GM18951 (cell line): ENCODE measurements at regions of chr3 and their contacts with region 1.

Region 1: DNA sequence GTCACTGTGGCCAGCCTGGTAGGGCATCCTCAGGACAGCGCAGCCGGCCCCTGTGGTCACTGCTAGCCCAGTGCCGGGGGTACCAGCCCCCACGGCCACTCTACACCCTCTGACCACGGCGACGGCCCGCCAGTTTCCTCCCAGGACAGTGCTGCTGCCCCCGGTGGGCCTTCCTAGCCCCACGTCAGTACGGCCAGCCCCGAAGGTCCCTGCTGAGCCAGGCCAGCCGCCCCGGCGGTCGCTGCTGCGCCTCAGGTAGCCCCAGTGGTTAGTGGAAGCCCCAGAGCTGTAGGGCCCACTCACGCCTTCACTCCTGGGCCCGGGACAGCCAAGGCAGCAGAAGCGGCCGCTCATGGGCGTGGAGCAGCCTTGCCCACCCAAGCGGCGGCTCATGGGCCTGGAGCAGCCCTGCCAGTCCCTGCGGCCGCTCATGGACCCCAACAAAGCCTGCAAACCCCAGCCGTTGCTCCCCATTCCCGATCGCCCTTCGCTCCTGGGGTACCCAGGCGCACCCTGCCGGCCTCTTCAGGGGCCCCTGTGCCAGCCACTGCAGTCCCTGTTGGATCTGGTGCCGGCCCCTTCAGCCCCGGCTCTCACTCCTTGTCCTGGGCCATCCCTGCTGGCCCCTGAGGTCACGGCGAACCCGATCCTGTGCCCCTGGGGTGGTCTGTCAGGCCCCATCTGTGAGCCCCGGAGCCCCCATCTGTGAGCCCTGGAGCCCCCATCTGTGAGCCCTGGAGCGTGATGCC is 9.5 kb upstream of the ROPN1B start:
- POLR2A ChIP-seq: no peak

Region 2: DNA sequence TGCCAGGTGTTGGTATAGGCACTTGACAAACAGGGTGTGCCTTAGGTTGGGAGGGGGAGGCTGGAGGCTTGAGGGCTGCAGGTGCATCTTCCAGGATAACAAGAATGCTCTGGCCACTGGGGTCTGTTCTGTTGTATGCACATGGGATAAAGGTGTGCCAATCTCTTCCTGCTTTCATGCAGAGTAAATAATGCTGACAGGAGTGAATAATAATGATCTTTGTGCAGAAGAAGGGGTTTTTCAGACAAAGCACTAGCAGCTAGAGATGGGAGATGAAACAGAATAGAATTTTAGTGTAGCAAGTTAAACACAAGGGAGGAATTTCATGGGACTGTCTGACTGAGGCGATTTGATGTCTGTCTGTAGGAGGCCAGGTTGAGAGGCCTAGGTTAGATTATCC is 1965.7 kb before region 1 on chr3:
- in situ Hi-C with region 1: loop called (anchors 10 kb)
- POLR2A ChIP-seq: no peak